A549 (cell line): ENCODE measurements at regions of chr1 and their contacts with region 1.

Region 1: GRCh38 chr1:48061162-48062136 is 64.3 kb upstream of the TRABD2B start:
- DNase-seq: peak; percentile 38 to 41
- ATAC-seq: peak; percentile 54 to 79; a peak in 3 of 6 replicates
- H3K4me3 ChIP-seq: no peak overlapping the region
- H3K27ac ChIP-seq: no peak overlapping the region
- H3K4me1 ChIP-seq: no peaks in the 10 kb centered on the region
- CTCF ChIP-seq: peak; percentile 50
- EP300 ChIP-seq: no peak
- POLR2A ChIP-seq: no peak
- RAD21 ChIP-seq: peak; percentile 51 to 57; a peak in 4 of 5 replicates

Region 2: DNA sequence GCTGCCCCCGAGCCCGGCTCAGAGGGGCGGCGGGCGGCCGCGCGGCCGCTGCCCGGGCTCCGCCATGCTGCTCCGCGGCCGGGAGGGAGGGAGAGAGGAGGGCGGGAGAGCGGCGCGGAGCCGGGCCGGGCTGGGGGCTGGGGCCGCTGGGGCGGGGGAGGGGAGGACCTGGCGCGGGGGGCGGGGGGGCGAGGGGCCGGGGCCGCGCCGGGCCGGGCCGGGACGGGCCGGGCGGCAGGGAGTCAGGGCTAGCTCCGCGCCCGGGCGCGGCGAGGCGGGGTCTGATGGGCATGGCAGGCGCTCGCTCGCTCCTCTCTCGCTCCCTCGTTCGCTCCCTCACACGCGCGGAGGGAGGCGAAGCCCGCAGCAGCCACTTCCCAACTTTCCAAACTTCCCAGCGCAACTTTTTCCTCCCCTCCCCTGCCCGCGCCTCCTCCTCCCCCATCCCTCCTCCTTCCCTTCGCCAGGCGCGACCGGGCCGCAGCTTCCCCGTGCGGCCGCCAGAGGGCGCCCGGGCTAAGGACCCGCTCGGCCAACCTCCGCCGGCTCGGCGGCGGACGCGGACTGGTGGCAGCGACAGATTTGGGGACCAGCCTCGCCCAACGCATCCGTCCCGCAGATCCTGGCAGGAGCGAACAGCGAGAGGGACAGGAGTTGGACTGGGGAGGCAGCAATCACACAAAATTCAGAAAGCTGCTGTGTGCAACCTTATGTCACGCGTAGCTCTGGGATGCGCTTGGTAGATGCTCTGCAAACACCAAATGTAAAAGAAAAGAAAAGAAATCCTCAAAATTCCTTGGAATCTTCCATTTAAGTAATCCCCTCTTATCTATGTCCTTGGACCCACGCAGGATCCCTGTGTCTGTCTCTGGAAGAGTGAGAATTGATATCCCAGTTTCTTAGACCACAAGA is 63.9 kb before region 1 on chr1 and contains the start of gene TRABD2B:
- CTCF ChIA-PET with region 1: interaction called, 31 read pairs
- POLR2A ChIA-PET with region 1: no interaction called
- DNase-seq: peak; percentile 63 to 74
- ATAC-seq: peak; percentile 78 to 91
- H3K4me3 ChIP-seq: peak within 1 kb of the TSS; percentile 83
- H3K27ac ChIP-seq: peak within 1 kb of the TSS; percentile 75 to 96
- H3K4me1 ChIP-seq: no peaks in the 10 kb centered on the region
- CTCF ChIP-seq: peak; percentile 74
- EP300 ChIP-seq: no peak
- POLR2A ChIP-seq: no peak
- RAD21 ChIP-seq: peak; percentile 50 to 68
- polyA plus RNA-seq, gene TRABD2B: 0.03 and 0.04 TPM in 2 replicates

Region 3: GRCh38 chr1:48017716-48018115 is 43.7 kb before region 1 on chr1:
- CTCF ChIA-PET with region 1: no interaction called
- POLR2A ChIA-PET with region 1: no interaction called
- DNase-seq: peak in 1 of 2 experiments; percentile 6
- ATAC-seq: peak in 1 of 2 experiments; percentile 63; a peak in 3 of 6 replicates
- H3K4me3 ChIP-seq: no peak overlapping the region
- H3K27ac ChIP-seq: no peak overlapping the region; a peak in 1 of 6 replicates
- H3K4me1 ChIP-seq: no peaks in the 10 kb centered on the region
- CTCF ChIP-seq: no peak
- EP300 ChIP-seq: no peak
- POLR2A ChIP-seq: no peak
- RAD21 ChIP-seq: no peak

Region 4: DNA sequence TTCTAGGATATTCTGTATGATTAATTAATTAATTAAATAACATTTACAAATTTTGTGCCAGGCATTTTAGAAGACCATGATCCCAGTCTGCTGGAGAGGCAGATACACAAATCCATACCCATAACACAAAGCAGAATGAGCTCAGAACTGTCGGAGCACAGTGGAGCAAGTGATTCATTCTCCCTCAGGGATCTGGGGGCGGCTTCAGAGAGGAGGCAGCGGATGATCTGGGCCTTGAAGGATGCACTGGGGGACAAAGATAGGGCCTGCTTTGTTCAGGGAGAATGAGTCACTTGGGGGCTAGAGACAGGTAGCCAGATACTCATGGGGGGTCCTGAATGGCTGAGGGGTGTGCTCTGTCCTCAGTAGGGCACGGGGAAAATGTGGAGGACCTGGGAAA is 13.4 kb before region 1 on chr1:
- CTCF ChIA-PET with region 1: interaction called, 31 read pairs
- POLR2A ChIA-PET with region 1: no interaction called
- DNase-seq: no peak
- ATAC-seq: no peak
- H3K4me3 ChIP-seq: no peak overlapping the region
- H3K27ac ChIP-seq: peak overlapping the region in 1 of 2 experiments; percentile 5; a peak in 1 of 6 replicates
- H3K4me1 ChIP-seq: no peaks in the 10 kb centered on the region
- CTCF ChIP-seq: no peak
- EP300 ChIP-seq: no peak
- POLR2A ChIP-seq: no peak
- RAD21 ChIP-seq: no peak